ENCODE measurements at regions of chr11 and their contacts with region 1.

Region 1: DNA sequence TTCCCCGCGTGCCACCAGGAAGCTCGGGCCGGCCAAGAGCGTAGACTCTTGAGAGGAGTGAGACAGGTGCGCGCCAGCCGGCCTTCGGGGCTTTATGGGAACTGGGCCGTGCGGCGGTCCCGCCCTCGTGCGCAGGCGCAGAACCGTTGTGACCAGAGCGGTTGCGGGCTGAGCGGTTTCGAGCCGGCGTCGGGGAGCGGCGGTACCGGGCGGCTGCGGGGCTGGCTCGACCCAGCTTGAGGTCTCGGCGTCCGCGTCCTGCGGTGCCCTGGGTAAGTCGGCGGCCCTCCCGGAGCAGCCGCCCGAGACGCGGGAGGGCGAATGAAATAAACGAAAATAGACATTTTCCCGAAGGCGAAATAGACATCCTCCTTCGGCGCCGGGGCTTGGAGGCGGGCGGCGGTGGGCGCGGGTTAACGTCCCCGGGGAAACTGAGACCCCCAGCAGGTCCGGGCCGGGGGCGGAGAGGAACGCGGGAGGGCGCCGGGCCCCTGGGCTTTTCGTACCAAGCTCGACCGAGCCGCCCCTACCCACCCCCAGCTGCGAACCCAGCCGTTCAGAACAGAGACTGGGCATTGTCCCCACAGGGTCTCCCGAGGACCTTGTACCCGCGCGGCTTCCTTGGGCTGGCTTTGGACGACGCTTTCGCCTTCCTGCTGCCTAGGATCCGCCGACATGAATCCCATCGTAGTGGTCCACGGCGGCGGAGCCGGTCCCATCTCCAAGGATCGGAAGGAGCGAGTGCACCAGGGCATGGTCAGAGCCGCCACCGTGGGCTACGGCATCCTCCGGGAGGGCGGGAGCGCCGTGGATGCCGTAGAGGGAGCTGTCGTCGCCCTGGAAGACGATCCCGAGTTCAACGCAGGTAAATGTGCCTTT is at the start of gene ASRGL1:
- DNase-seq: peak; percentile 74 to 97 (median 90)

Region 2: GRCh38 chr11:62273789-62274275 is 63.7 kb before region 1 on chr11:
- intact Hi-C with region 1: no loop called
- DNase-seq: no peak

Region 3: DNA sequence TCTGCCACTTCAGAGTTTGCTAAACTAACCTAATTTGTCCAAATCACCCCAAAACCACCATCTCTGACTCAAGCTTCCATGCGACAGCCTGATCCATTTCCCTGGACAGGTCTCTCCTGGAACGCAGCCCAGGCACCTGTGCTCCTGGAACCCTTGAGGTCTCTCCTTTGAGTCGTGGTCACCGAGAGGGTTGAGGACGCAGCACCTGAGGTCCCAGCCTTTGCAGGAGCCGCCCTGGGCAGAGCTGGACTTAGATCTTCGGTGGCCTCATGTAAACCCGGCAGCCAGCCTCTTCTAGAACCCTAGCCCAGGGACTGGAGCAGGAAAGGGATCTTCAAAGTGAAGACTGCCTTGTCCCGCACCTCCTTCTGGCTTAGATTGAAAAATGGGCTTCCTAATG is 37.3 kb after region 1 on chr11:
- intact Hi-C with region 1: loop called (anchors 5 kb)
- DNase-seq: no peak